ENCODE measurements at regions of chr17 and their contacts with region 1.

Region 1: GRCh38 chr17:49694847-49695683 is 12.7 kb downstream of the SLC35B1 start:
- DNase-seq: peak; percentile 50 to 78 (median 65)
- H3K4me3 ChIP-seq: no peak overlapping the region
- H3K4me3 Mint-ChIP-seq: peak overlapping the region in 6 of 7 donors; percentile 15 to 79 (median 50)
- H3K27ac ChIP-seq: no peak overlapping the region
- H3K27ac Mint-ChIP-seq: peak overlapping the region; percentile 79 to 96 (median 90)
- H3K4me1 ChIP-seq: peaks cover 24% of the 10 kb centered on the region
- H3K4me1 Mint-ChIP-seq: peaks cover 34 to 44% (median 34%) of the 10 kb centered on the region in 3 donors
- H3K27me3 ChIP-seq: no peaks in the 10 kb centered on the region
- H3K27me3 Mint-ChIP-seq: no peaks in the 10 kb centered on the region

Region 2: DNA sequence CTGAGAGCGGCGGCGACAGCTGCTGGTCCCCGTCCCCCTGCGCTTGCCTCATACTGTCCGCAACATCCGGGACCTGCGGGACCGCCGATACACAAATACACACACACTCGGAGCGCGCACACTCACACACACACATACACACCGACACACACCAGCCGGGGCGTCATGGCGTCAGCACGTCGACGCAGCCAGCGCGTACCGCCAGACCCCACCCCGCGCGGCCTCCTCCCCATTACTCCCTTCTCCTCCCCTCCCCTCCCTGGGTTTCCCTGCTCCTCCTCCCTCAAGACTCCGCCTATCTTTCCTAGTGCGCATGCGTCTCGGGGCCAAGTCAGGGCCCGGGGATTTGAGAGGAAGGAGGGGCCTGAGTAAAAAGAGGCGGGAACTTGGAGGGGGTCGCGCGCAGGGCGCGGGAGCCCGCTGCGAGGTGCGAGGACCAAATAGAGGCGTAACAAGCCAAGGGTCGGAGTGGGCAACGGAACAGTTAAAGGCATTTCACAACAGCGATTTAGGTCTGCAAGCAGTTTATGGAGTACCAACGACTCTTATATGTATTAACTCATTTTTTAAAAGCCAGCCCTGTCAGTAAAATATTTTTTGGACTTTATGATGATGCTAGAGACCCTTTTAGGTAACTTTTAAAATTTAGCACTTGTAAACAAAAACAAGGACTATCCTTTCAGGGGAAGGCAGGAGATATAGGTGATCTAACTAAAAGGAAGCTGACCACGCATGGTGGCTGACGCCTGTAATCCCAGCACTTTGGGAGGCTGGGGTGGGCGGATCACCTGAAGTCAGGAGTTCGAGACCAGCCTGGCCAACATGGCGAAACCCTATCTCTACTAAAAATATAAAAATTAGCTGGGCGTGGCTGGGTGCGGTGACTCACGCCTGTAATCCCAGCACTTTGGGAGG is 16.9 kb before region 1 on chr17 and contains the start of gene SPOP:
- CTCF ChIA-PET with region 1: interaction called, 10 read pairs
- POLR2A ChIA-PET with region 1: interaction called, 5 read pairs
- DNase-seq: peak; percentile 98 to 100 (median 99)
- H3K4me3 ChIP-seq: peak within 1 kb of the TSS; percentile 87
- H3K4me3 Mint-ChIP-seq: peak within 1 kb of the TSS; percentile 90 to 98 (median 92)
- H3K27ac ChIP-seq: peak within 1 kb of the TSS; percentile 96
- H3K27ac Mint-ChIP-seq: peak within 1 kb of the TSS; percentile 90 to 99 (median 98)
- H3K4me1 ChIP-seq: peaks cover 37% of the 10 kb centered on the region
- H3K4me1 Mint-ChIP-seq: peaks cover 43 to 50% (median 49%) of the 10 kb centered on the region in 3 donors
- H3K27me3 ChIP-seq: no peaks in the 10 kb centered on the region
- H3K27me3 Mint-ChIP-seq: peaks cover 0 to 10% of the 10 kb centered on the region in 2 donors
- total RNA-seq, gene SPOP: 74.8 to 75.1 TPM

Region 3: GRCh38 chr17:49727380-49727779 is 32.3 kb after region 1 on chr17:
- CTCF ChIA-PET with region 1: no interaction called
- POLR2A ChIA-PET with region 1: no interaction called
- DNase-seq: no peak
- H3K4me3 ChIP-seq: no peak overlapping the region
- H3K4me3 Mint-ChIP-seq: peak overlapping the region in 2 of 7 donors; percentile 20 to 54
- H3K27ac ChIP-seq: no peak overlapping the region
- H3K27ac Mint-ChIP-seq: peak overlapping the region in 6 of 8 donors; percentile 69 to 94 (median 84)
- H3K4me1 ChIP-seq: peaks cover 44% of the 10 kb centered on the region
- H3K4me1 Mint-ChIP-seq: peaks cover 65 to 88% (median 66%) of the 10 kb centered on the region in 3 donors
- H3K27me3 ChIP-seq: no peaks in the 10 kb centered on the region
- H3K27me3 Mint-ChIP-seq: no peaks in the 10 kb centered on the region